MCF 10A (cell line): ENCODE measurements at regions of chr1 and their contacts with region 1.

Region 1: GRCh38 chr1:78004719-78005447 is at the start of gene DNAJB4:
- DNase-seq: peak; percentile 97
- H3K4me3 Mint-ChIP-seq: peak within 1 kb of the TSS; percentile 88
- H3K27ac Mint-ChIP-seq: peak within 1 kb of the TSS; percentile 97
- H3K4me1 Mint-ChIP-seq: peaks cover 19% of the 10 kb centered on the region
- H3K27me3 Mint-ChIP-seq: no peaks in the 10 kb centered on the region
- CTCF ChIP-seq: no peak
- total RNA-seq, gene DNAJB4: 28.5 and 33.5 TPM in 2 replicates

Region 2: DNA sequence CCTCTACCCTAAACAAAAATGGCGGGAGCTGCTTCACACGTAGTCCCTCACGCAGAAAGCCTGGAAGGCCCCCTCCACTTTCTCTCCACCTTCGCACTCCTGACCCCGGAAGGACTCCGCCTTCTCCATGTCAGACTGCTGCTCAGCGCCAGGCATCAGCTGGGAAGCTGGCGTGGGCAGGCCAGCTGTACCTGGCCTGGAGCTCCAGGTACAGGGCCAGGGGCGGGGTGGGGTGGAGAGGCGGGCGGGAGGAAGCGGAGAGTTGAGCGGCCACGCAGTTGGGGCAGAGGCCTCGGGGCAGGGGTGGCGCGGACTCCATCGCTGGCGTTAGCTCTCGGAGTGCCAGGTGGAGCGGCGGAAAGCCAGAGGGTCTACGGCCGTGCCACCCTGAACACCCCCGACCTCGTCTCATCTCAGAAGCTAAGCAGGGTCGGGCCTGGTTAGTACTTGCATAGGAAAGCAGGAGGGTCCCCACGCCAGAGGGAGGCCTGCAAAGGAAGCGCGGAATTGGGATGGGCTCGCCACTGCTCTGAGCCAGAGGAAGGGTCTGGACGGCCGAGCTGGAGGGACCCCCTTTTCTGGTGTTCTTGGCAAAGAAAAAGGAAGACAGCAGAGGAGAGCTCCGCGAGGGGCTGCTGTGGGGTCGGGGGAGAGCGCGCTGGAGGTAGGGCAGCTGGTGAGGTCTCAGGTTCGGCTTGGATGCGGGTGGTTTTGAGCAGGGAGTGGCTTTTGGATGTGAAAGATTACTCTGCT is 225.2 kb before region 1 on chr1 and contains the start of gene MIGA1:
- CTCF ChIA-PET with region 1: no interaction called
- POLR2A ChIA-PET with region 1: interaction called, 15 read pairs
- intact Hi-C with region 1: no loop called
- DNase-seq: peak; percentile 92
- H3K4me3 Mint-ChIP-seq: peak within 1 kb of the TSS; percentile 94
- H3K27ac Mint-ChIP-seq: peak within 1 kb of the TSS; percentile 84
- H3K4me1 Mint-ChIP-seq: peaks cover 4% of the 10 kb centered on the region
- H3K27me3 Mint-ChIP-seq: no peaks in the 10 kb centered on the region
- CTCF ChIP-seq: no peak
- total RNA-seq, gene MIGA1: 13.2 and 19.9 TPM in 2 replicates

Region 3: GRCh38 chr1:77986810-77987209 is 18.1 kb before region 1 on chr1:
- CTCF ChIA-PET with region 1: interaction called, 18 read pairs
- POLR2A ChIA-PET with region 1: interaction called, 598 read pairs
- intact Hi-C with region 1: no loop called
- DNase-seq: no peak
- H3K4me3 Mint-ChIP-seq: no peak overlapping the region
- H3K27ac Mint-ChIP-seq: no peak overlapping the region
- H3K4me1 Mint-ChIP-seq: peaks cover 38% of the 10 kb centered on the region
- H3K27me3 Mint-ChIP-seq: no peaks in the 10 kb centered on the region
- CTCF ChIP-seq: no peak

Region 4: GRCh38 chr1:78032996-78033796 is 28.3 kb after region 1 on chr1:
- CTCF ChIA-PET with region 1: interaction called, 9 read pairs
- POLR2A ChIA-PET with region 1: interaction called, 79 read pairs
- intact Hi-C with region 1: no loop called
- DNase-seq: peak; percentile 73
- H3K4me3 Mint-ChIP-seq: no peak overlapping the region
- H3K27ac Mint-ChIP-seq: no peak overlapping the region
- H3K4me1 Mint-ChIP-seq: peaks cover 19% of the 10 kb centered on the region
- H3K27me3 Mint-ChIP-seq: no peaks in the 10 kb centered on the region
- CTCF ChIP-seq: no peak

Region 5: DNA sequence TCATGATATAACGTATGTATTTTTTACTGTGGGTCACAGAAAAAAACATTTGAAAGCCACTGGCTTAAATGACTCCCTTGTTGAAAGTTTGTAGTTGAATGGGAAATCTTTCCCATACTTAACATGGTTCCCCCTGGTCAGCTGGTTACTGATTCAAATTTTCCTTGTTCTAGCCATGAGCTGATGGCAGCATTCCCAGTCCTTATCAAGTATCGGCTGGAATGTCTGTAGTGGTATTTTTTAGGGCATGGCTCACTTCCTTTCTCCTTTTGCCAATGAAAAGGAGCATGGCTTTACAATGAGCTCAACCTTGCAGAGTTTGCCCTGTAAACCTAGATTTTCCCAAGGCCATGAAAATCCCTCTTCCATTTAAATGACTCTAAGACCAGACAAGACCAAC is 96.6 kb after region 1 on chr1:
- CTCF ChIA-PET with region 1: interaction called, 5 read pairs
- POLR2A ChIA-PET with region 1: interaction called, 27 read pairs
- intact Hi-C with region 1: no loop called
- DNase-seq: peak; percentile 45
- H3K4me3 Mint-ChIP-seq: no peak overlapping the region
- H3K27ac Mint-ChIP-seq: peak overlapping the region; percentile 35
- H3K4me1 Mint-ChIP-seq: peaks cover 14% of the 10 kb centered on the region
- H3K27me3 Mint-ChIP-seq: no peaks in the 10 kb centered on the region
- CTCF ChIP-seq: no peak

Region 6: GRCh38 chr1:78263459-78263858 is 258.6 kb after region 1 on chr1:
- CTCF ChIA-PET with region 1: no interaction called
- POLR2A ChIA-PET with region 1: no interaction called
- intact Hi-C with region 1: no loop called
- DNase-seq: no peak
- H3K4me3 Mint-ChIP-seq: no peak overlapping the region
- H3K27ac Mint-ChIP-seq: no peak overlapping the region
- H3K4me1 Mint-ChIP-seq: no peaks in the 10 kb centered on the region
- H3K27me3 Mint-ChIP-seq: no peaks in the 10 kb centered on the region
- CTCF ChIP-seq: no peak

Region 7: DNA sequence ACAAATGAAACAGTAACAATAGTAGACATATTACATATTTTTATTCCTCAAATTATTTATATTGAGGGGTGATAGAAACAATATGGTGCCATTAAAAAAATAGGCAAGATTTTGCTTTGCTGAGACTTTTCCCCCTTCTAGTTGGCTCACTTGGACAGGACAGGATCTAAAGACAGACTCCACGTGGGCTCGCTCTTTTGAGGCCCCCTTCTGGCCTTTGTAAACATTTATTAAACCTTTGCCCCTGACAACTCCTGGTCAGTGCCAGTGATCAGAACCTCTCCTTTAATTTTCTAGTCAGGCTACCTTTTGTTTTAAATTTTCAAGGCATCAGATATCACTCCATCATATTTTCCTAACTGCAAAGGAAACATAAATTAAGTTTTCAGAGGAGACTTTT is 565.7 kb after region 1 on chr1:
- CTCF ChIA-PET with region 1: no interaction called
- POLR2A ChIA-PET with region 1: no interaction called
- intact Hi-C with region 1: no loop called
- DNase-seq: peak; percentile 9
- H3K4me3 Mint-ChIP-seq: no peak overlapping the region
- H3K27ac Mint-ChIP-seq: peak overlapping the region; percentile 14
- H3K4me1 Mint-ChIP-seq: no peaks in the 10 kb centered on the region
- H3K27me3 Mint-ChIP-seq: no peaks in the 10 kb centered on the region
- CTCF ChIP-seq: no peak